Activated B cell treated with CpG ODN at 0.5 μM for 24 hours (primary cell): ENCODE measurements at regions of chr11 and their contacts with region 1.

Region 1: DNA sequence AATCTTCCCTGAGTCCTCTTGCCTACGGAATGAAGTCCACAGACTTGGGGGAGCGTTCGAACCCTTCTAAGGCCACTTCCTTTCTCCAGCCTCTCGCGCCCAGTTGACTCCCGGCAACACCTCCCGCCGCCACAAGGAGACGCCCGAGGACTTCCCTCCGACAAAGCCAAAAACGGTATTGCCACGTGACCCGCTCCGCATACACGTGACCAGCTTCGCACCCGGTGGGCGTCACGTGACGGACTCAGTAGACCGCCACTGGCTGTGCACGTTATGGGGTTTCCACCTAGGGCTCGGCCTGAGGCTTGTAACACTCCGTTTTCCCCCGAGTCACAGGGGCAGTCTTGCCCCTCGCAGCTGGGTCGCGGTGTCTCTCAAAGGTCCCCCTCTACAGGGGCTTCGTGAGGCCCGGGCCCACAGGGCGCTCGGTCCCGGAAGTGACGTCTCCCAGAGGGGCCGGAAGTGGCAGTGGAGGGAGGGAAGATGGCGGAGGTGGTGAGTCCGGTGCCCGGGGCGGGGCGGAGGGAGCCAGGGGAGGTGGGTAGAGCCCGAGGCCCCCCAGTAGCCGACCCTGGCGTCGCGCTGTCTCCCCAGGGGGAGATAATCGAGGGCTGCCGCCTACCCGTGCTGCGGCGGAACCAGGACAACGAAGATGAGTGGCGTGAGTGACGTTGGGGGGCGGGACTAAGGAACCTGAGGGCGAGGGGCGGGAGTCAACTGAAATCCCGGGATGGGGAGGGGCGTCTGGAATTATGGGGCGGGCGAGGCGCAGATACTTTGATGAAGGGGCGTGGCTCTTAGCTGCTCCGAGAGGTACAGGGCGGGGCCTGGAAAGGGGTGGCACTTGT is at the start of gene KAT5:
- DNase-seq: peak; percentile 98
- ATAC-seq: peak; percentile 81
- H3K4me3 Mint-ChIP-seq: peak within 1 kb of the TSS; percentile 95
- H3K27ac Mint-ChIP-seq: peak within 1 kb of the TSS; percentile 99
- H3K4me1 Mint-ChIP-seq: peaks cover 25% of the 10 kb centered on the region
- H3K27me3 Mint-ChIP-seq: no peaks in the 10 kb centered on the region
- CTCF ChIP-seq: peak; percentile 70
- total RNA-seq, gene KAT5: 108 and 120 TPM in 2 replicates

Region 2: DNA sequence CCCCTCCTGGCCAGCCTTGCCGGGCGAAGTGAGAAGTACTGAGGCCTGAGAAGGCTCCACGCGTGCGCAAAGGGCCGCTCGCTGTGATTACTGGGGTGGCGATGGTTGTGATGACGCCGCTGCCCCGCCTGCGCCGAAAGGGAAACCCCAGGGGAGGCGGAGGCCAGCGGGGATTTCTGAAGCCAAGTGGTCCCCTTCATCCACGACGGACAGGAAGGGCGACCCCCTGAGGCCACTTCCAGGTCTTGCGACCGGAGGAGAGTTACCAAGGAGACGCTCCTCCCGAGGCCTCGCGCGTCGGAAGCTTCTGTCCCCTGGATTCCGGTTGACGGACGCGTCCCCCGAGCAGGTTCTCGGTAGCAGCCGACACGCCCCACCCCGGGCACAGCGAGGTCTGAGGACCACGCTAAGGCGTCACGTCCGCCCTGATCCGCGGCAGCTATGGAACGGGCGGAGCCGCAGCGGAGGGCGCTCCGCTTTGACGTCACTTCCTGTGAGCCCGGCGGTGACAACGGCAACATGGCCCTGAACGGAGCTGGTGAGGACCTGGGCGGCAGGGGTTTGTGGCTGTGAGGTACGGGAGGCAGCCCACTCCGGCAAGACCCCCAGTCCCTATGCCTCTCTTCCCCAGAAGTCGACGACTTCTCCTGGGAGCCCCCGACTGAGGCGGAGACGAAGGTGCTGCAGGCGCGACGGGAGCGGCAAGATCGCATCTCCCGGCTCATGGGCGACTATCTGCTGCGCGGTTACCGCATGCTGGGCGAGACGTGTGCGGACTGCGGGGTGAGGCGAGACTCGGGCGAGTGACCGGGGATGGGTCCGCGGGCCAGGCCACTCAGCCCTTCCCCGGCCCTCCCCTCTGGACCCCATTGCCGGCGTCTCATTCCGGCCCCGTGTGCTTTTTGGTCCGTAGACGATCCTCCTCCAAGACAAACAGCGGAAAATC is 141.8 kb before region 1 on chr11 and contains the start of gene ZNRD2:
- CTCF ChIA-PET with region 1: no interaction called
- POLR2A ChIA-PET with region 1: interaction called, 4 read pairs
- intact Hi-C with region 1: loop called (anchors 2 kb)
- DNase-seq: peak; percentile 93
- ATAC-seq: peak; percentile 68
- H3K4me3 Mint-ChIP-seq: peak within 1 kb of the TSS; percentile 99
- H3K27ac Mint-ChIP-seq: peak within 1 kb of the TSS; percentile 99
- H3K4me1 Mint-ChIP-seq: peaks cover 78% of the 10 kb centered on the region
- H3K27me3 Mint-ChIP-seq: no peaks in the 10 kb centered on the region
- CTCF ChIP-seq: no peak
- total RNA-seq, gene ZNRD2: 40.9 and 41.0 TPM in 2 replicates

Region 3: DNA sequence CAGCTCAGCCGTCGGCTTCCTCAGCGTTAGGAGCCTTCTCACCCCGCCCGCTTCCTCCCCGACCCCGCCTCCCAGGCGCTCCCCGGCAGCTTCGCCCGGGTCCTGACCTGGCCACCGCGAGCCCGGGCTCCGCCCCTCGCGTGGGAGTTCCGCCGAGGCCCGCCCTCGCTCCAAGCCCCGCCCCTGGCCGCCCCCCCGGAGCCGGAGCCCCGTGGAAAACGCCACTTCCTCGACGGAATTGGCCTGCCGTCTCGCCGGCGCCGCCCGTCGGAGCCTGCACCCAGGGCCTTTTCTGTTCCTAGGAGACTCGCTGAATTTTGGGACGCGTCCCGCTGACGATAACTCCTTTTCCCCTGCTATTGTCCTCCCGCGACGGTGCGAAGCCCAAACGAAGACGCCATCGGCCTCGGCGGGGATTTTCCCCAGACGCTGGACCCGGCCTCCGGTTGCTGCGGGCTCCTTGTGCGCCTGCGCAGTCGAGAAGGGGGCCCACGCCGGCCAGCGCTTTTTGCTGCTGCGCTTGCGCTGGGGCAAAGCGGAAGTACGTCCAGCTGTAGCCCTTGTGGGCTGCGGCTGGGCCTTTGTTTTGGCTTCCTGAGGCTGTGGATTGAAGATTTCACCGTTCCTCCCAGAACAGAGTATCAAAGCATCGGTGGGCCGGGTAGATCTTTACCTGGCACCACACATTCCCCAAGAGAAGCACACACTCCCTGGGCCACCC is 59.3 kb before region 1 on chr11:
- CTCF ChIA-PET with region 1: no interaction called
- POLR2A ChIA-PET with region 1: interaction called, 15 read pairs
- intact Hi-C with region 1: no loop called
- DNase-seq: peak; percentile 98
- ATAC-seq: peak; percentile 89
- H3K4me3 Mint-ChIP-seq: peak overlapping the region; percentile 90
- H3K27ac Mint-ChIP-seq: peak overlapping the region; percentile 95
- H3K4me1 Mint-ChIP-seq: peaks cover 44% of the 10 kb centered on the region
- H3K27me3 Mint-ChIP-seq: no peaks in the 10 kb centered on the region
- CTCF ChIP-seq: no peak

Region 4: GRCh38 chr11:65791691-65792213 is 79.7 kb after region 1 on chr11:
- CTCF ChIA-PET with region 1: interaction called, 3 read pairs
- POLR2A ChIA-PET with region 1: interaction called, 11 read pairs
- intact Hi-C with region 1: no loop called
- DNase-seq: peak; percentile 52
- ATAC-seq: peak; percentile 93
- H3K4me3 Mint-ChIP-seq: no peak overlapping the region
- H3K27ac Mint-ChIP-seq: peak overlapping the region; percentile 80
- H3K4me1 Mint-ChIP-seq: peaks cover 40% of the 10 kb centered on the region
- H3K27me3 Mint-ChIP-seq: peaks cover 6% of the 10 kb centered on the region
- CTCF ChIP-seq: no peak

Region 5: DNA sequence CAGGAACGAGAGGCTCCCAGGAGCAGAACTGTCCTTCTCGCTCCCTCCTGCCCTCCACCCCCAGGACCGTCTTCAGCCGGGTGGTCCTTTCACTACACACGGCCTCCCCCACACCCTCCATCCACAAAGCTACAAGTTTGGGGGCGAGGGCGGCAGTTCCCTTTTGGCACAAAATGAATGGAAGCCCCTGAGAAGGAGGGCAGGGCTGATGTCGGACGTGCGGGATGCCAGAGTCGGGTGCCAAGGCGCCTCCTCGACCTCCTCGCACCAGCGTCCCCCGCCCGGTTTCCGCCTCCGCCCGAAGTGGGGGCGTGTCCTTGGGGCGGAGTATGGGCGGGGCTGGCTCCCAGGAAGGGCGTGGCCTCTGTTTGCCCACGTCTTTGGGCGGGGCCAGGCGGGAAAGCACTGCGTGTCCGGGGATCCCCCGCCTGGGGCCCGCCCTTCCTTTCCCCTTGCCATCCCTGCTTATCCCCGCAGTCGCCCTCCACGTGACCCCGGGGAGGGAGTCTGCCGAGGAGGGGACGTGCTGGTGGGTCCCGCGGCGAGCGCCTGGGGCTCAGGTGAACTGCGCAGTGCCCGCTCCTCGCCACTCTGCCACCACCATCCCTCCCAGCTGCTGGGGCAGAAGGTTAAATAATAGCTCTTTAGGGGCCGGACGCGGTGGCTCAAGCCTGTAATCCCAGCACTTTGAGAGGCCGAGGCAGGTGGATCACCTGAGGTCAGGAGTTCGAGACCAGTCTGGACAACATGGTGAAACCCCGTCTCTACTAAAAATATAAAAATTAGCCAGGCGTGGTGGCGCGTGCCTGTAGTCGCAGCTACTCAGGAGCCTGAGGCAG is 161.5 kb after region 1 on chr11:
- CTCF ChIA-PET with region 1: no interaction called
- POLR2A ChIA-PET with region 1: interaction called, 17 read pairs
- intact Hi-C with region 1: no loop called
- DNase-seq: peak; percentile 99
- ATAC-seq: peak; percentile 95
- H3K4me3 Mint-ChIP-seq: peak overlapping the region; percentile 90
- H3K27ac Mint-ChIP-seq: peak overlapping the region; percentile 88
- H3K4me1 Mint-ChIP-seq: peaks cover 20% of the 10 kb centered on the region
- H3K27me3 Mint-ChIP-seq: peaks cover 5% of the 10 kb centered on the region
- CTCF ChIP-seq: no peak

Region 6: GRCh38 chr11:66001942-66002647 is 290.1 kb after region 1 on chr11 and contains the starts of genes BANF1 and EIF1AD:
- CTCF ChIA-PET with region 1: interaction called, 3 read pairs
- POLR2A ChIA-PET with region 1: interaction called, 10 read pairs
- intact Hi-C with region 1: loop called (anchors 1 kb)
- DNase-seq: peak; percentile 86
- ATAC-seq: peak; percentile 82
- H3K4me3 Mint-ChIP-seq: peak within 1 kb of the TSS; percentile 100
- H3K27ac Mint-ChIP-seq: peak within 1 kb of the TSS; percentile 98
- H3K4me1 Mint-ChIP-seq: peaks cover 36% of the 10 kb centered on the region
- H3K27me3 Mint-ChIP-seq: no peaks in the 10 kb centered on the region
- CTCF ChIP-seq: no peak
- total RNA-seq, gene BANF1: 220 and 228 TPM in 2 replicates
- total RNA-seq, gene EIF1AD: 50.7 and 58.9 TPM in 2 replicates

Region 7: DNA sequence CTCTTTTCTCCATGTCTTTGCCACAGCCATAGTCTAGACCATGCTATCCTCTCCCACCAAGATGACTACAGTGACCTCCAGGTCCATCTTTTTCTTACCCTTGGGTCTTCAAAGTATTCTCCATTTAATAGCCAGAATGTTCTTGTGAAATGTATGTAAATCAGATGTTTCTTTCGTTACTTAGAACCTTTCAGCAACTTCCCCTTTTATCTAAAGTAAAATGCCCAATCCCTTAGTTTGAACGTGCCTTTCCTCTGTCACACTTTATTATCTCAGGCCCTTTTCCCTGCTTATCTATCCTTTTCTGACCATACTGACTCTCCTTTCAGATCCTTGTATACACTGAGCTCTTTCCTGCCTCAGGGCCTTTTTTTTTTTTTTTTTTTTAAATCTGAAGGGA is 947.8 kb after region 1 on chr11:
- CTCF ChIA-PET with region 1: no interaction called
- POLR2A ChIA-PET with region 1: no interaction called
- intact Hi-C with region 1: no loop called
- DNase-seq: no peak
- ATAC-seq: peak; percentile 57
- H3K4me3 Mint-ChIP-seq: peak overlapping the region; percentile 55
- H3K27ac Mint-ChIP-seq: peak overlapping the region; percentile 74
- H3K4me1 Mint-ChIP-seq: peaks cover 39% of the 10 kb centered on the region
- H3K27me3 Mint-ChIP-seq: no peaks in the 10 kb centered on the region
- CTCF ChIP-seq: no peak